WTC11 (cell line): ENCODE measurements at regions of chr19 and their contacts with region 1.

Region 1: DNA sequence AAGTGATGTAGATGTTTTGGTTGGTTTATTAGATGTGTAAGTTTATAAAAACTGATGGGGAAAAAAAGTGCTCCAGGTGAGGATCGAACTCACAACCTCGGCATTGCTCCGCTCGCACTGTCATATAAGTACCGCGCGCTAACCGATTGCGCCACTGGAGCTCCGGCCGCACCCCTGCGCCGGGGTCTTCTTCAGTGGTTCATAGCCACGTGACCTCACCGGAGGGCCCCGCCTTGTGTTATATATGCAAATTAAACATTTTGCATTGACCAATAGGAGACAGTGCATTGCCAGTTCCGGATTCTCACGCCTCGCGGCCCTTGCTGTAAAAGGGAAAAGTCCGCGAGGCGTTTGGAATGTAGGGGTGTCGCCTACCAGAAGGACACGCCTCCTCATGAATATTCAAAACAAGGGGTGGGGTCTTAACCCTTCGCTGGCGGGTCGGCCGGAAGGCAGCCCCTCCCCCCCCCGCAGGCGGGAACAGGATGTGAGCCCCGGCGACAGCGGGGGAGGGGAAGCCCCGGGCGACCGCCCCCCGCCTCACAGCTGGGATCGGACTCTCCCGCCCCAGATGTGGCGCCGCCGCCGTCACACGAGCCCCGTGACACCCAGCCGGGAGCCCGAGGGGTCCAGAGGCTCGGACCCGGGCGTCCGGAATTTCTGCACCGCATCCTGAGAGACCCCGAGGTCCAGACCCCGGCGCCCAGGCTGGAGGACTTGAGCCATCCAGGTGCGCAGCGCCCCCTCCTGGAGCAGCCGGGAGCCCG is at the start of gene PLEKHG2:
- DNase-seq: peak; percentile 98
- ATAC-seq: peak; percentile 64
- H3K4me3 Mint-ChIP-seq: peak within 1 kb of the TSS; percentile 99
- H3K27ac Mint-ChIP-seq: peak within 1 kb of the TSS; percentile 84
- H3K4me1 Mint-ChIP-seq: peaks cover 47% of the 10 kb centered on the region
- H3K27me3 Mint-ChIP-seq: no peaks in the 10 kb centered on the region
- CTCF ChIP-seq: no peak; the same call in none of the 2 replicates
- total RNA-seq, gene PLEKHG2: 62.3 to 72.0 TPM (median 63.6 TPM) in 3 replicates

Region 2: GRCh38 chr19:39390755-39391592 is 21.3 kb before region 1 on chr19 and contains the starts of genes MED29 and PAF1:
- CTCF ChIA-PET with region 1: interaction called, 38 read pairs
- POLR2A ChIA-PET with region 1: interaction called, 9 read pairs
- DNase-seq: peak; percentile 96
- ATAC-seq: peak; percentile 96
- H3K4me3 Mint-ChIP-seq: peak within 1 kb of the TSS; percentile 100
- H3K27ac Mint-ChIP-seq: peak within 1 kb of the TSS; percentile 99
- H3K4me1 Mint-ChIP-seq: peaks cover 14% of the 10 kb centered on the region
- H3K27me3 Mint-ChIP-seq: no peaks in the 10 kb centered on the region; the same call in 1 of the 2 replicates
- CTCF ChIP-seq: no peak
- total RNA-seq, gene MED29: 37.6 to 42.9 TPM (median 39.4 TPM) in 3 replicates
- total RNA-seq, gene PAF1: 27.8 to 34.4 TPM (median 29.4 TPM) in 3 replicates

Region 3: DNA sequence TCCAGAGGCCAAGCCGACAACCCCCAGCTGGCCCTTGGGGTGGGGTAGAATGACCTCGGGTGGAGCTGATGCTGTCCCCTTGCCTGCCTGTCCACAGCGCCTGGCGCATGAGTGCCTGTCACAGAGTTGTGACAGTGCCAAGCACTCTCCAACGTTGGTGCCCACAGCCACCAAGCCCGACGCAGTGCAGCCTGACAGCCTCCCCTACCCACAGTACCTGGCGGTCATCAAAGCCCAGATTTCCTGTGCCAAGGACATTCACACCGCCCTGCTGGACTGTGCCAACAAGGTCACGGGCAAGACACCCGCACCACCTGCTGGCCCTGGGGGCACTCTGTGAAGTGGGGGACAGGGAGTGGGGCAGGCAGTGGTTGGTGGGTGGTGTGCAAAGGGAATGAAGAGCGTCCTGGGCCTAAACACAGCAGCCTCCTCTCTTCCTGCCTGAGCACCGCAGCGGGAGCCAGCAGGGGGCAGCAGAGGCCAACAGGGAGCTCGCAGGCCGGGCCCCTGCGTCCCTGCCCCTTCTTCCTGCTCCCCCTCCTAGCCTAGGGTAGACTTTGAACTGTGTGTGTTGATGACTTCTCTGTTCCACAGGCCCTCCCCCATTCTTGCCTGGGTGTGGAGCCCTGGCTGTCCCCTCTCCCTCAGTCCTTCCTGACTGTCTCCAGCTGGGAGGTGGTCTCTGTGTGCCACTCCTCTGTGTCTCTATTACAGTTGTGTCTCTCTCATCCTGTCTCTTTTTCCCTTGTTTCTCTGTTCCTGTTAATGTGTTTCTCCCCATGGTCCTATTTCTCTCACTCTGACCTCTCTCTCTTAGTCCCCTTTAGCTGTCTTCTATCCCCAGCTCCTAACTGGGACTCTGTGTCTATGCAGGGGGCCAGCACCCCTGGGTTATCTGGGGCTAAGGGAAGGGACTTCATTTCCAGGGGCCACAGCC is 14.7 kb before region 1 on chr19:
- CTCF ChIA-PET with region 1: interaction called, 43 read pairs
- POLR2A ChIA-PET with region 1: interaction called, 8 read pairs
- DNase-seq: peak; percentile 94
- ATAC-seq: peak; percentile 88
- H3K4me3 Mint-ChIP-seq: no peak overlapping the region
- H3K27ac Mint-ChIP-seq: peak overlapping the region; percentile 54
- H3K4me1 Mint-ChIP-seq: peaks cover 25% of the 10 kb centered on the region
- H3K27me3 Mint-ChIP-seq: no peaks in the 10 kb centered on the region
- CTCF ChIP-seq: peak; percentile 93

Region 4: GRCh38 chr19:39428283-39429112 is 16.2 kb after region 1 on chr19:
- CTCF ChIA-PET with region 1: interaction called, 11 read pairs
- POLR2A ChIA-PET with region 1: interaction called, 16 read pairs
- DNase-seq: peak; percentile 93
- ATAC-seq: peak; percentile 84
- H3K4me3 Mint-ChIP-seq: peak overlapping the region; percentile 57
- H3K27ac Mint-ChIP-seq: peak overlapping the region; percentile 98
- H3K4me1 Mint-ChIP-seq: peaks cover 36% of the 10 kb centered on the region
- H3K27me3 Mint-ChIP-seq: no peaks in the 10 kb centered on the region
- CTCF ChIP-seq: no peak

Region 5: GRCh38 chr19:39906820-39907611 is 494.7 kb after region 1 on chr19:
- CTCF ChIA-PET with region 1: no interaction called
- POLR2A ChIA-PET with region 1: no interaction called
- DNase-seq: no peak
- ATAC-seq: no peak
- H3K4me3 Mint-ChIP-seq: no peak overlapping the region
- H3K27ac Mint-ChIP-seq: no peak overlapping the region
- H3K4me1 Mint-ChIP-seq: no peaks in the 10 kb centered on the region
- H3K27me3 Mint-ChIP-seq: no peaks in the 10 kb centered on the region
- CTCF ChIP-seq: no peak